ENCODE measurements at regions of chr15 and their contacts with region 1.

Region 1: GRCh38 chr15:72155635-72156616 is 37.7 kb downstream of the SENP8 start:
- DNase-seq: peak; percentile 81 to 88
- ATAC-seq: peak; percentile 86 to 98 (median 93)
- H3K4me3 ChIP-seq: peak overlapping the region; percentile 27 to 64 (median 56)
- H3K27ac ChIP-seq: peak overlapping the region in 7 of 10 donors; percentile 2 to 57 (median 30)
- H3K4me1 ChIP-seq: peaks cover 0 to 12% (median 8%) of the 10 kb centered on the region in 9 donors
- H3K27me3 ChIP-seq: no peaks in the 10 kb centered on the region
- CTCF ChIP-seq: peak; percentile 73 to 90 (median 85)

Region 2: GRCh38 chr15:71448688-71449114 is 707.2 kb before region 1 on chr15:
- intact Hi-C with region 1: loop called in 1 of 10 experiments (anchors 10 kb)
- DNase-seq: peak in 1 of 2 donors; percentile 62
- ATAC-seq: peak; percentile 47 to 82 (median 65)
- H3K4me3 ChIP-seq: no peak overlapping the region
- H3K27ac ChIP-seq: peak overlapping the region in 9 of 10 donors; percentile 19 to 66 (median 54)
- H3K4me1 ChIP-seq: peaks cover 0 to 58% (median 30%) of the 10 kb centered on the region in 9 donors
- H3K27me3 ChIP-seq: no peaks in the 10 kb centered on the region
- CTCF ChIP-seq: peak; percentile 74 to 97 (median 91)

Region 3: GRCh38 chr15:71752604-71753289 is 403.2 kb before region 1 on chr15:
- intact Hi-C with region 1: loop called in 3 of 10 experiments (anchors 5 kb)
- DNase-seq: no peak
- ATAC-seq: peak in 2 of 8 donors; percentile 39 to 53
- H3K4me3 ChIP-seq: no peak overlapping the region
- H3K27ac ChIP-seq: no peak overlapping the region
- H3K4me1 ChIP-seq: peaks cover 0 to 16% (median 5%) of the 10 kb centered on the region in 9 donors
- H3K27me3 ChIP-seq: no peaks in the 10 kb centered on the region
- CTCF ChIP-seq: peak in 7 of 9 donors; percentile 32 to 59 (median 47)

Region 4: DNA sequence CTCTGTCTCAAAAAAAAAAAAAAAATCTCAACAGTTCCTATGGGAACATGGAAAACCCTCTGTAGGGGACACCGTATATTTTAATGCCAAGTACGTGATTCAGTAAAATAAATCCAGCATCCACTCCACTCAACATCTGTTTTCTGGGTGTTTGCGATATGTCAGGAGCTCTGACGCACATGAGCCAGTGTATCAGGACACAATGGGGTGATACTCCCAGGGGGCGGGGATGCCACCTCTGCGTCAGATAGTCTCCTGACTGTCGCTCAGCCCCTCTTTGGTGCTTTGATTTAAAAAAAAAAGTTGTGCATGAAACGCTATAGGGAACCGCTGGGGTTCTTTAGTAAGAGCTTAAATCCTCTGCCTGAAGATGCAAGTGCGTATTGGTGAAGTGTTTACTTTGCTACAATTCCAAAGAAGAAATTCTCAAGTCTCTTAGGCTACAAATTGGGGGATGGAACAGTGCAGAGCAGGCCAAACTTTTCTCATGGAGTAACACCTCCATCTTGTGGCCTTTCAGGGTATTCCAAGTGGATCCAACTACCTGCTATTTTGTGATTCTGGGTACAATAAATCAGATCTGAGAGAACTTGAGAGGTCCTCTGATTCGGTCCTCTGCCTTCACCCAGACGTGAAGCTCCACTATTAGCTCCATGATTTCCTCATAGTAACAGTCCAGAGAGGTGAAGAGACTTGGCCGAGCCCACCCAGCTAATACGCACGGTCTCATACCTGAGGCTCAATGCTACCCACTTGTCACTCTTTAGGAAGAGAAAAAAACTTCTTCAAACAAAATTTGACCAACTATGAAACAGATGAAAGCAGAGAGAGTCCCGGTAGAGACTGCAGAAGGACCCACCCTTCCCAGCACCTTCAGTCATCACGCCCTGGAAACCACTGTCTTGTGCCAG is 354.8 kb before region 1 on chr15:
- intact Hi-C with region 1: loop called in 2 of 10 experiments (anchors 10 kb)
- DNase-seq: peak in 1 of 2 donors; percentile 40
- ATAC-seq: peak; percentile 65 to 90 (median 80)
- H3K4me3 ChIP-seq: no peak overlapping the region
- H3K27ac ChIP-seq: no peak overlapping the region
- H3K4me1 ChIP-seq: peaks cover 0 to 11% (median 5%) of the 10 kb centered on the region in 9 donors
- H3K27me3 ChIP-seq: peaks cover 0 to 4% (median 0%) of the 10 kb centered on the region in 7 donors
- CTCF ChIP-seq: peak; percentile 74 to 92 (median 85)

Region 5: DNA sequence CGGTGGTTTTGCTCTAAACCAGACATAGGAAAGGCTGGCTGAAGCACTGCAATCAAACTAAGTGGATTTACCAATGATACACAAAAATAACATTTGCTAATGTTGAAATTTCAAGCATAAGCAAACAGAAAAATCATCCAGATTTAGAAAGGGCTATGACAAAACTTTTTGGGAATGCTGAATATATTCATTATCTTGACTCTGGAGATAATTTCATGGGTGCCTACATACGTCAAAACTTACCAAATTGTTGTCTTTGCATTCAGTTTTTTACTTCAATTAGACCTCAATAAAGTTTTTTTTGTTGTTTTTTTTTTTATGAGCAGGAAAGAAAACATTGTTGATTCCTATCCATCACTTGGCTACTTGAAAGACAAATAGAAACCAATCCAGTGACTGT is 204.8 kb before region 1 on chr15:
- intact Hi-C with region 1: loop called in 1 of 10 experiments (anchors 10 kb)
- DNase-seq: no peak
- ATAC-seq: no peak
- H3K4me3 ChIP-seq: no peak overlapping the region
- H3K27ac ChIP-seq: no peak overlapping the region
- H3K4me1 ChIP-seq: no peaks in the 10 kb centered on the region
- H3K27me3 ChIP-seq: no peaks in the 10 kb centered on the region
- CTCF ChIP-seq: no peak

Region 6: DNA sequence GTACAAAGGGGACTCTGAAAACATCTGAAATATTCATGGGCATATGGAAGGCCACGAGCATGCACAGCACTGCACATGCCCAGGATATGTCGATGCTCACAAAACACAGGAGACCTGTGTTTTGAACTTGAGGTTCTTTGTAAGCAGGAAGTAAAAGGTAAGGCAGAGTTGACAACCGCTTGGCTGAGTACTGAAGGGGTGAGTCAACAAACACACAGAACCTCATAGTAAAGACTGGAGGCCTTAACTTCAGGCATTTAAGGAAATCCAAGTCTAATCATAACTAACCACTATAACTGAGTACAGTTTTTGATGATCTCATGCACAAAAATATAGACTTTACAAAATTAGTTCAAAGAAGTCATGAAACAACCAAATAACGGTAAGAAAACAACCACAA is 118.6 kb before region 1 on chr15:
- intact Hi-C with region 1: loop called in 1 of 10 experiments (anchors 10 kb)
- DNase-seq: no peak
- ATAC-seq: no peak
- H3K4me3 ChIP-seq: no peak overlapping the region
- H3K27ac ChIP-seq: no peak overlapping the region
- H3K4me1 ChIP-seq: peaks cover 0 to 29% (median 11%) of the 10 kb centered on the region in 9 donors
- H3K27me3 ChIP-seq: no peaks in the 10 kb centered on the region
- CTCF ChIP-seq: no peak